PC-3 (cell line): ENCODE measurements at regions of chr11 and their contacts with region 1.

Region 1: GRCh38 chr11:19951558-19952115 is 208.6 kb downstream of the DBX1 start:
- DNase-seq: peak; percentile 87
- ATAC-seq: peak; percentile 55
- H3K4me3 ChIP-seq: no peak overlapping the region
- H3K27ac ChIP-seq: no peak overlapping the region
- H3K4me1 ChIP-seq: peaks cover 26% of the 10 kb centered on the region
- H3K27me3 ChIP-seq: no peaks in the 10 kb centered on the region
- CTCF ChIP-seq: peak; percentile 70

Region 2: GRCh38 chr11:19756675-19757475 is 194.8 kb before region 1 on chr11:
- CTCF ChIA-PET with region 1: no interaction called
- POLR2A ChIA-PET with region 1: no interaction called
- intact Hi-C with region 1: no loop called
- DNase-seq: no peak
- ATAC-seq: no peak
- H3K4me3 ChIP-seq: no peak overlapping the region
- H3K27ac ChIP-seq: no peak overlapping the region
- H3K4me1 ChIP-seq: 0 out of 2 replicates have a peak, but pooled peaks cover 4% of the 10 kb centered on the region
- H3K27me3 ChIP-seq: no peaks in the 10 kb centered on the region
- CTCF ChIP-seq: no peak

Region 3: DNA sequence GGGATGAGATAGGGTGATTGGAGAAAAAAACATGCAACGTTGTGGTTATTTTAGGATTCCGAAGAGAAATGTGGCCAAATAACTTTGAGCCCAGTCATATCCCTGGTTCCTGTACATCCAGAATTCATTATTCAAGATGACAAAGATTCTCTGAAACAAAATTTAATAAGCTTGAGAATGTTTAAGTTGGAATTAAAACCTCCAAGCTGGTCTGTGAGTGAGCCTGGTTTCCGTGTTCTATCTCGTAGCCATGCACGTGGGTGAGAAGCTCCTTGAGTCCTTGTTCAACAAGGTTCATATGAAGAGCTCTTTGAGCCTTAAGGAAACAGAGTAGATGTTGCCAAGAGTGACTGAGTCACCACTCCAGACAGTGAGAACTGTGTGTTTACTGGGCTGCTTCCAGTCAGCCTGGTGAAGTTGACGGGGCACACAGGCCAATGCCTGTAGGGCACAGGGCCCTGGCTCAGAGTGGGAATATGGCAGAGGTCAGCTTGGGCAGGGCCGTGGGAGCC is 32.5 kb before region 1 on chr11:
- CTCF ChIA-PET with region 1: no interaction called
- POLR2A ChIA-PET with region 1: no interaction called
- intact Hi-C with region 1: loop called (anchors 1 kb)
- DNase-seq: peak; percentile 97
- ATAC-seq: peak; percentile 95
- H3K4me3 ChIP-seq: no peak overlapping the region
- H3K27ac ChIP-seq: peak overlapping the region; percentile 96
- H3K4me1 ChIP-seq: peaks cover 48% of the 10 kb centered on the region
- H3K27me3 ChIP-seq: no peaks in the 10 kb centered on the region
- CTCF ChIP-seq: no peak

Region 4: GRCh38 chr11:20035701-20036620 is 84.3 kb after region 1 on chr11:
- CTCF ChIA-PET with region 1: no interaction called
- POLR2A ChIA-PET with region 1: no interaction called
- intact Hi-C with region 1: loop called (anchors 10 kb)
- DNase-seq: peak; percentile 95
- ATAC-seq: peak; percentile 94
- H3K4me3 ChIP-seq: no peak overlapping the region
- H3K27ac ChIP-seq: peak overlapping the region; percentile 91
- H3K4me1 ChIP-seq: peaks cover 36% of the 10 kb centered on the region
- H3K27me3 ChIP-seq: no peaks in the 10 kb centered on the region
- CTCF ChIP-seq: peak; percentile 31; the same call in 1 of the 2 replicates

Region 5: DNA sequence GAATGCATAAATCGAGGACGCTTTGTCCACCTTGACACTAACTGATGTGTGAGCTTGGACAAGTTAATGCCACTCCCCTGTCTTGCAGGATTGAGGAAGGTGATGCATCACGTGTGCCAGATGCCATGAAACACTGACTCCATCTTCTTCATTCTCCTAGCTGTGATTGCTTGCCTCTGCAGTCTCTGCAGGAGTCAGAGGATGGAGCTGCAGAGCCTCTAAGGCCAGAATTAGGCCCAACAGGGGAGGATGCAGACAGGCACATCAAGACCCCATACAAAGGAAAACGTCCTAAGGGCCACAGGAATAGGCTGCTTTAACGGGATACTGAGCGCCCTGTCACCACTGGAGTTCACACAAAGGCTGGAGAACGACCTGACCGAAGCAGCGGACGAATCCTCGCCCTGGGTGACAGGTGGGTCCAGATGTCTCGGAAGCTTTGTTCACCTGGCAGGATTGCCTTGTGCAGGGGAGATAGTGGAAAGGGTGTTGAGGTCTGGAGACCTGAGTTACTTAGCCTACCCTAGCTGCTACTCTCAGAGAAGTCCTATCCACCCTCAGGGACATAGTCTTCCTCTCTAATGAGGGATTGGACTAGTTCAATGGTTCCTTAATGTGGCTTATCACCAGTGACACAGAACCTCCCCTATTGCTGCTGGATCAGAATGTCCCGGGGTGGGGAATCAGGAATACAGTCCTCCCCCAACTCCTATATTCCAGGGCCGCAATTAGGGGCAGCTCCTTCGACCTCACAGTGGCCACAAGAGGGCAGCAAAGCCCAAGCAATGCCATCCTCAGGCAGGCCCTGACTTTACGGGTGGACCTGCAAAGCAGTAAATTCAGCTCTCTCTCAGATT is 176.3 kb after region 1 on chr11:
- CTCF ChIA-PET with region 1: interaction called, 6 read pairs
- POLR2A ChIA-PET with region 1: no interaction called
- intact Hi-C with region 1: loop called (anchors 1 kb)
- DNase-seq: peak; percentile 78
- ATAC-seq: peak; percentile 64
- H3K4me3 ChIP-seq: no peak overlapping the region
- H3K27ac ChIP-seq: no peak overlapping the region
- H3K4me1 ChIP-seq: peaks cover 26% of the 10 kb centered on the region
- H3K27me3 ChIP-seq: no peaks in the 10 kb centered on the region
- CTCF ChIP-seq: peak; percentile 85

Region 6: GRCh38 chr11:20355221-20356219 is 403.9 kb after region 1 on chr11:
- CTCF ChIA-PET with region 1: no interaction called
- POLR2A ChIA-PET with region 1: no interaction called
- intact Hi-C with region 1: loop called (anchors 5 kb)
- DNase-seq: peak; percentile 68
- ATAC-seq: peak; percentile 90
- H3K4me3 ChIP-seq: no peak overlapping the region
- H3K27ac ChIP-seq: no peak overlapping the region
- H3K4me1 ChIP-seq: peaks cover 15% of the 10 kb centered on the region
- H3K27me3 ChIP-seq: peaks cover under 1% of the 10 kb centered on the region; the same call in 1 of the 2 replicates
- CTCF ChIP-seq: peak; percentile 69